ENCODE measurements at regions of chr17 and their contacts with region 1.

Region 1: GRCh38 chr17:43388359-43389045 is 10.3 kb upstream of the ARL4D start:
- DNase-seq: peak; percentile 89
- H3K4me3 Mint-ChIP-seq: peak overlapping the region; percentile 89
- H3K27ac Mint-ChIP-seq: peak overlapping the region; percentile 93
- H3K4me1 Mint-ChIP-seq: peaks cover 26% of the 10 kb centered on the region
- H3K27me3 Mint-ChIP-seq: peaks cover 4% of the 10 kb centered on the region

Region 2: DNA sequence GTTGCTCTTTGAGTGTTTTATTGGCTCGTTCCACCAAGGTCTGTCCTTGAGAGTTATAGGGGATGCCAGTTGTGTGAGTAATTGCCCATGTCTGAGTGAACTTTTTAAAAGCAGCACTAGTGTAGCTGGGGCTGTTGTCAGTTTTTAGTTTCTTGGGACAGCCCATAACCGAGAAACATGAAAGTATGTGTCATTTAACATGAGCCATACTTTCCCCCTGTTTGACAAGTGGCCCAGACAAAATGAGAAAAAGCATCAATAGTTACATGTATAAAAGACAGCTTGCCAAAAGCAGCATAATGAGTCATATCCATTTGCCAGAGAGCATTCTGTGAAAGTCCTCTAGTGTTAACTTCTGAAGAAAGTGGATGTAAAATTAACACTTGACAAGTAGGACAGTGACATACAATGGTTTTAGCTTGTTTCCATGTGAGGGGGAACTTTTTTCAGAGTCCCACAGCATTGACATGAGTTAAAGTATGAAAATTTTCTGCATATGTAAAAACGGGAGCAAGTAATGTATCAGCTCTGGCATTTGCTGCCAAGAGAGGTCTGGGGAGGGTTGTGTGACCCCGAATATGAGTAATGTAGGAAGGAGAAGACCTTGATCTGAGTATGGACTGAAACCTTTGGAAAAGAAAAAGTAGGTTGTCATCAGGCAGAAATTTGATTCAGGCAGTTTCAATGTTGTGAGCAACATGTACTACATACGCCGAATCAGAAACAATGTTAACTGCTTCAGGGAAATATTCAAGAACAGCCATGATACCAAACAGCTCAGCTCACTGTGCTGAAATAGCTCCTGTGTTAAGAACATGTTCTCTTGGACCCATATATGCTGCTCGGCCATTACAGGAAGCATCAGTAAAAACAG is 46.5 kb before region 1 on chr17:
- intact Hi-C with region 1: loop called (anchors 2 kb)
- DNase-seq: no peak
- H3K4me3 Mint-ChIP-seq: peak overlapping the region; percentile 34
- H3K27ac Mint-ChIP-seq: peak overlapping the region; percentile 91
- H3K4me1 Mint-ChIP-seq: peaks cover 14% of the 10 kb centered on the region
- H3K27me3 Mint-ChIP-seq: peaks cover 4% of the 10 kb centered on the region

Region 3: GRCh38 chr17:43360739-43361505 is 27.6 kb before region 1 on chr17:
- intact Hi-C with region 1: loop called (anchors 1 kb)
- DNase-seq: peak; percentile 92
- H3K4me3 Mint-ChIP-seq: peak overlapping the region; percentile 85
- H3K27ac Mint-ChIP-seq: peak overlapping the region; percentile 100
- H3K4me1 Mint-ChIP-seq: peaks cover 40% of the 10 kb centered on the region
- H3K27me3 Mint-ChIP-seq: no peaks in the 10 kb centered on the region

Region 4: DNA sequence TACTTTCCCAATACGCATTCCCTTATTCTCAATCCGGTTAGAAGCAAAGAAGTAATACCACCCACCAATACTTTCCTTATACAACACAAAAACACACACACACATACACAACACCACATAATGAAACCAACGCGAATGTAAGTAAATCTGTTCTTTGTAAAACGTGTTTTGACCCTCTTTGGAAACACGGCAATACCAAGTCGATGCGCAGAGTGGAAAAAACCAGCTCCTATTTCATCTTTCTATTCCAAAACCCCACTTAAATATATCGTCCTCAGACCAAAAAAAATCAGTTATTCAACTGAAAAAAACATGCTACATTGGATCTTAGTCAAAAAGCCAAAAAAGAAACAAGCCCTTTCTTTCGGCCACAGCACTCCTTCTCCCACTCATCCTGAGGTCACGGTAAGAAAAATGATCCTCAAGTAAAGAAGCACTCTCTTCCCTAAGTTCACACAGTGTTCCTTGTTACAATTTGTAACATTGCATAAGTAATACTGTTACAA is 20.7 kb before region 1 on chr17:
- intact Hi-C with region 1: loop called (anchors 1 kb)
- DNase-seq: peak; percentile 66
- H3K4me3 Mint-ChIP-seq: peak overlapping the region; percentile 91
- H3K27ac Mint-ChIP-seq: peak overlapping the region; percentile 100
- H3K4me1 Mint-ChIP-seq: peaks cover 44% of the 10 kb centered on the region
- H3K27me3 Mint-ChIP-seq: no peaks in the 10 kb centered on the region

Region 5: GRCh38 chr17:43483674-43484372 is 95.3 kb after region 1 on chr17 and contains the start of gene DHX8:
- intact Hi-C with region 1: loop called (anchors 1 kb)
- DNase-seq: peak; percentile 98
- H3K4me3 Mint-ChIP-seq: peak within 1 kb of the TSS; percentile 99
- H3K27ac Mint-ChIP-seq: peak within 1 kb of the TSS; percentile 95
- H3K4me1 Mint-ChIP-seq: peaks cover 22% of the 10 kb centered on the region
- H3K27me3 Mint-ChIP-seq: peaks cover 2% of the 10 kb centered on the region
- total RNA-seq, gene DHX8: 57.0 and 59.8 TPM in 2 replicates

Region 6: DNA sequence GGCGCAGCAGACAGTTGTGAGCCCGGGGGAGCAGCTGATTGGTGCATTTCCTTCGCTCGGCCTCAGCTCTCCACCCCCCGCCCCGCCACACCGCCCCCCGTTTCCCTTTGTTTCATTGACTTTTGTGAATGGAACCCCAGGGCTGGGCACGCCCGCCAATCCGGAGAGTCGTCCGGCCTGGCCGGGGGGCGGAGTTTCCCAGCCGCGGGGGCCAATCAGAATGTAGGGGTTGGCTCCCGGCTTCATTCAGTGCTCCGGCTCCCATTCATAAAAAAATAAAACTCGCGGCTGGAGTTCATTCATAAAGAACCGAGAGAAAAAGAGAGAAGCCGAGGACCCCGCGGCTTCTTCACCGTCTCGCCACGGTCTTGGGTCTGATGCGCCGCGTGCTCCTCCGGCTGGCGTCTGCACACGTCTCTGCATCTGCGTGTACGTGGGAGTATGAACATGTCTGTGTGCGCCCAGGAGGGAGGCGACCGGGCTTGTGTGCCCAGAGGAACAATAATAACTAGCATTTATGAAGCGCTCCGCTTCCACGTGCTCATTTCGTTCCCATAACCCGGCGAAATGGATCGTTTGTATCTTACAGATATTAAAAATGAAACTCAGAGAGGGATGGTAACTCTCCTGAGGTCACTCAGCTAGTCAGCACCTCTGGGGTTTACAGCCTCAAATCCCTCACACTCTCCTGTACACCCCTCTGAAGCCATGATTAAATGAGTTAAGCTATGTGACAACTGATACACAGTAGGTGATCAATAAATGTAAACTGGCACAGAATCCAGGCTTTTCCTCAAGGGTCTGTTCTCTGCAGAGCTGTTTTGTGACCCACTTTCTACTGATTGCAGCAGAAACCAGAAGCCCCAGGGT is 158.1 kb after region 1 on chr17 and contains the start of gene ETV4:
- intact Hi-C with region 1: loop called (anchors 2 kb)
- DNase-seq: peak; percentile 91
- H3K4me3 Mint-ChIP-seq: peak within 1 kb of the TSS; percentile 91
- H3K27ac Mint-ChIP-seq: peak within 1 kb of the TSS; percentile 83
- H3K4me1 Mint-ChIP-seq: peaks cover 24% of the 10 kb centered on the region
- H3K27me3 Mint-ChIP-seq: peaks cover 54% of the 10 kb centered on the region
- total RNA-seq, gene ETV4: 6.9 and 8.1 TPM in 2 replicates